K562 (cell line): ENCODE measurements at regions of chr18 and their contacts with region 1.

Region 1: GRCh38 chr18:23479829-23480505 is 23.3 kb upstream of the RMC1 start:
- DNase-seq: no peak
- ATAC-seq: no peak
- H3K4me3 ChIP-seq: no peak overlapping the region
- H3K27ac ChIP-seq: no peak overlapping the region
- H3K4me1 ChIP-seq: peaks cover 0 to 3% of the 10 kb centered on the region in 2 experiments; a peak in 1 of 5 replicates
- H3K27me3 ChIP-seq: no peaks in the 10 kb centered on the region
- CTCF ChIP-seq: no peak
- EP300 ChIP-seq: no peak
- POLR2A ChIP-seq: no peak
- RAD21 ChIP-seq: no peak

Region 2: GRCh38 chr18:23460285-23461273 is 19.4 kb before region 1 on chr18:
- CTCF ChIA-PET with region 1: interaction called, 5 read pairs
- POLR2A ChIA-PET with region 1: interaction called, 12 read pairs
- in situ Hi-C with region 1: no loop called
- intact Hi-C with region 1: no loop called
- DNase-seq: no peak
- ATAC-seq: peak; percentile 53
- H3K4me3 ChIP-seq: no peak overlapping the region
- H3K27ac ChIP-seq: no peak overlapping the region
- H3K4me1 ChIP-seq: peaks cover under 1 to 6% of the 10 kb centered on the region in 2 experiments; a peak in 2 of 5 replicates
- H3K27me3 ChIP-seq: no peaks in the 10 kb centered on the region
- CTCF ChIP-seq: no peak
- EP300 ChIP-seq: no peak
- POLR2A ChIP-seq: no peak
- RAD21 ChIP-seq: no peak

Region 3: GRCh38 chr18:23629444-23629946 is 149.5 kb after region 1 on chr18:
- CTCF ChIA-PET with region 1: no interaction called
- POLR2A ChIA-PET with region 1: no interaction called
- in situ Hi-C with region 1: no loop called
- intact Hi-C with region 1: no loop called
- DNase-seq: no peak
- ATAC-seq: peak; percentile 45
- H3K4me3 ChIP-seq: no peak overlapping the region
- H3K27ac ChIP-seq: no peak overlapping the region
- H3K4me1 ChIP-seq: no peaks in the 10 kb centered on the region; a peak in 2 of 5 replicates
- H3K27me3 ChIP-seq: peaks cover 0 to 10% of the 10 kb centered on the region in 2 experiments; a peak in 2 of 5 replicates
- CTCF ChIP-seq: no peak
- EP300 ChIP-seq: no peak
- POLR2A ChIP-seq: no peak
- RAD21 ChIP-seq: no peak